ENCODE measurements at regions of chr5 and their contacts with region 1.

Region 1: DNA sequence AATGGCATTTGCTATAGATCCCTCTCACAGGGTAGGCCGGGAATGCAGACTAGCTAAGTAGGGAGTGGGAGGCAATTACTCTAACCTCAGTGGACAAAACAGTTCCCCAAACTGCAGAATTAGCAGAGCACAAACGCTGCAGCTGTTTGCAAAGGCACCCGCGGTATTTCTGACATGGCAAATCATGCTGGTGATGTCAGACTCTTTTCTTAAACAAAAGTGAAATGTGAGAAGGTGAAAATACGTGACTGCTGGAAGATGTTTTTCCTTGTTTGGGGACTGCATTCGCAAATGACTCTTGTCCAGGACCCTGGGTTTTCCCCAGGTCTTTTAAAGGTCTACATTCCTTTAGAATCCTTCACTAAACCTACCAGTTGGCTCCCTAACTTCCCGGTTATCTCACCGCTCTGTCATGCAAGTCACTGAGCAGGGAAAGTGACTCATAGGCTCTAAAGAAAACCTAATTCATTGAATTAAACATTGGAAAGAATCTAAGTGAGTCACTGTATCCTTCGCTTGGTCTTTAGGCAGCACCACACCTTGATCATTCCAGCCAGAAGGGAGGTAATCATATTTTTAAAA is 91.5 kb upstream of the DNAH5 start:
- DNase-seq: peak; percentile 99
- ATAC-seq: peak; percentile 81
- H3K4me3 ChIP-seq: peak overlapping the region; percentile 10 to 35
- H3K27ac ChIP-seq: peak overlapping the region; percentile 100
- H3K4me1 ChIP-seq: peaks cover 58% of the 10 kb centered on the region
- H3K27me3 ChIP-seq: no peaks in the 10 kb centered on the region
- CTCF ChIP-seq: no peak

Region 2: DNA sequence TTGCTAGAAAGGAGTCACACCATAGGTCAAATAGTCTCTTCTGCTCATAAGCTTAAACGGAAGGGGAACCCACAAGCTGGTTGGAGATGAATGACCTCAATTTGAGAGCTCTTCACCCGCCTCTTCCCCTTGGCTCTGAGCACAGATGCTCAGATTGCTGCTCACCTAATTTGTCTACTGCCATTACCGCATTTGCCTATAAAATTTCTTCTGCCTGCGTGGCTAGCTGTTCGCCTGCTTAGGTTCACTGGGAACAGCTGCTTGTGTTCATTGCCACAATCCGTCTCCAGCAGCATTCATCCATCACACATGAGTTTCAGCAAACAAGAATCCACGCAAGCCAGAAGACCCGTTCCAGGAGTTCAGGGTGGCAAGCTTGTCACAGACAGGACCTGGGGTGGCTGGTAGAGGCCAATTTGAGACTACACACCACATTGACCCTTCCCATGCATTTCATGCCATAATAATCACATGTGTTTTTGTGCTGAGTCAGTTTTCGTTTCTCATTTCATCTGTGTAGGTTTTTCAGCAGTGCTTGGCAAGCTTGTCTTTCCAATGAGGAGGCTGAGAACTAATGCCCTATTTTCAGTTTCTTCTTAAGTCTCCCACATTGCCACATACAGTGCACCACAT is 41.2 kb before region 1 on chr5:
- CTCF ChIA-PET with region 1: no interaction called
- POLR2A ChIA-PET with region 1: no interaction called
- in situ Hi-C with region 1: no loop called
- intact Hi-C with region 1: loop called (anchors 5 kb)
- DNase-seq: no peak
- ATAC-seq: peak; percentile 53
- H3K4me3 ChIP-seq: peak overlapping the region in 1 of 2 experiments; percentile 15; a peak in 2 of 4 replicates
- H3K27ac ChIP-seq: peak overlapping the region; percentile 98
- H3K4me1 ChIP-seq: peaks cover 63% of the 10 kb centered on the region
- H3K27me3 ChIP-seq: no peaks in the 10 kb centered on the region
- CTCF ChIP-seq: no peak

Region 3: DNA sequence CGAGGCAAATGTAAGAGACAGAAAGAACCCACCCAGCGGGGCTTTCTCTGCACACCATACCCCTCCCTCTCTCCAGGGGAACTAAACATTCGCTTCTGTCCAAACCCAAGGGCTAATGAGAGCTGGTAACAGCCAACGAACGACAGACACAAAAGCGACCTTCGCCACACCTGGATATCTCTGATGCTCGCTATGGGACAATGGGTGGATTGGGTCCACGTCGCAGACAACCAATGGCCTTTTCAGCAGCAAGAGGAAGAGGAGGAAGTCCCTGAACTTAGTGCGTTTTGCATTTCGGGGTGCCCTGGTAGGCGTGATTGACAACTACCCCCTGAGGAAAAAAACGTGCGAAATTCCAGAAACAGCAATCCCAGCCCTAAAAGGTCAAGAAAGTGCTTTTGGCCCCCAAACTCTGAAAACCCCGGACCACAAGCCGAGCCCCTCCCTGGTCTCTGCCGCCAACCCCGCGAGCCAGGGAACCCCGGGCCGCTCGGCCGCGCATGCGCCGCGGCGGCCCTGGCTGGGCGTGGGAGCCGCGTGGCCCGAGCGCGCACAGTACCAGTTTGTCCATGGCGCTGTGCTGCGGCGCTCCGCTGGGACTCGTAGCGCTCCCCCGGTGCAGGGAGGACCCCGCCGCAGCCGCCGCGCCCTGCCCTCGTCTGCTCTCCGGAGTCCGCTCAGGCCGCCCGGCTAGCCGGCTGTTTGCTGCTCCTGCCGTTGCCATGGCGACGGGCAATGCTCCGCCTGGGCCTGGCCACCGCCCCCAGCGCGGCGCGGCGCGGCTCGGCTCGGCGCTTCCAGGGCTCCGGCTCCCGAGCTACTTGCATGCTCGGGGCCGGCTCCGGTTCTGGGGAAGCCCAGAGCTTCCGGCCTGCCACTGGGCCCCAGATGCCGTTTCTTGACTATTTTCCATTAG is 24.6 kb before region 1 on chr5:
- CTCF ChIA-PET with region 1: interaction called, 3 read pairs
- POLR2A ChIA-PET with region 1: interaction called, 14 read pairs
- in situ Hi-C with region 1: no loop called
- intact Hi-C with region 1: no loop called
- DNase-seq: peak; percentile 67
- ATAC-seq: peak; percentile 90
- H3K4me3 ChIP-seq: peak overlapping the region; percentile 64 to 91
- H3K27ac ChIP-seq: peak overlapping the region; percentile 99
- H3K4me1 ChIP-seq: peaks cover 62% of the 10 kb centered on the region
- H3K27me3 ChIP-seq: no peaks in the 10 kb centered on the region
- CTCF ChIP-seq: no peak

Region 4: DNA sequence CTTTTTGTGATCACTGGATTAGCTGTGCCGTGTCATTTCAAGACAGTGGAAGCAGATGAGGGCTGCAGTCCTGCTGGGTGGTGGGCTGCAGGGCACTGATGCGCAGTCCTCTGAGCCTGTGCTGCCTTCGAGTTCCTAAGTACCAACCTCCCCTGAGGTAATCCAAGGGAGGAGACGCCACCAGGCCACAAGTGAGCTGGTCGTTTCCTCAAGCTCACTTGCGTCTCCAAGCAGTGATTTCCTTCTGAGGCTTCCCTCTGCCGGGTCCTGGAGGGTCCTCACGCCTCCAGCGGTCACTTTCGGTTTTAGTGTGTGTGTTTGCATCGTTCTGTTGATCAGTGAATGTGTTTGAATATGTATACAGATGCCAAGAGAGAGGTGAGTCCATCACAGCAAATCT is 222.9 kb after region 1 on chr5:
- CTCF ChIA-PET with region 1: no interaction called
- POLR2A ChIA-PET with region 1: no interaction called
- in situ Hi-C with region 1: no loop called
- intact Hi-C with region 1: no loop called
- DNase-seq: no peak
- ATAC-seq: peak; percentile 20
- H3K4me3 ChIP-seq: peak overlapping the region; percentile 0 to 21; a peak in 3 of 4 replicates
- H3K27ac ChIP-seq: peak overlapping the region; percentile 96
- H3K4me1 ChIP-seq: peaks cover 99% of the 10 kb centered on the region
- H3K27me3 ChIP-seq: no peaks in the 10 kb centered on the region
- CTCF ChIP-seq: 0 out of 2 replicates have a peak, but pooled peaks have one; percentile 15